IMR-90 (cell line): ENCODE measurements at regions of chr5 and their contacts with region 1.

Region 1: DNA sequence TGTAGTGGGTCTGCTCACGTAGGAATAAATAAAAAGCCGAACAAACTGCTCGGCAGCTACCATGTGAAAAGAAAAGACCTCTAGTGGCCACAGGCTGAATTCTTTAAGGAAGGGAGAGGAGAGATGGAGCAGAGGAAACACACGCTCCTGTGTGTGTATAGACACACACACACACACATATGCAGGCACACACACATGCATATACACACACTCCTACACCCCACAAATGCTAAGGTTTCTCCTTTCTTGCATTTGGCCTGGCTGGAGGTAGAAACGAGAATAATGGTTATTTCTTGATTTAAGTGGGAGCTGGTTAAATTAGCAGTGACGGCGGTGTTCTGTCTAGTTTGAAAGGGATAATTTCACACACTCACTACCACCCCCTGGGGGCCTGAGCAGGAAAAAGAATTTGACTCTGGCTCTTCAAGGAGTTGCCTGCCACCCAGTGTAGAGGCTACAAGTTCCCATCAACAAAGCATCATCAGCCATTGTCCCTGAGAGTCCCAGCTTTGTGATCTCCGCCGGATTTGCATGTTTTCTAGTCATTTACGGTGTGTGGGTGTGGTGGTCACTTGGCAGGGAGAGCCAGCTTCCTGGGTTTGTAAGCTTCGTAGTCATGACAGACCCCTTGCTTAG is at the start of gene INSYN2B:
- DNase-seq: peak; percentile 87
- ATAC-seq: peak; percentile 79
- H3K4me3 ChIP-seq: peak within 1 kb of the TSS; percentile 66
- H3K27ac ChIP-seq: peak within 1 kb of the TSS; percentile 85
- H3K4me1 ChIP-seq: peaks cover 21% of the 10 kb centered on the region
- H3K27me3 ChIP-seq: no peaks in the 10 kb centered on the region
- CTCF ChIP-seq: peak; percentile 89
- POLR2A ChIP-seq: peak; percentile 55
- RAD21 ChIP-seq: peak; percentile 78
- total RNA-seq, gene INSYN2B: 33.5 and 43.6 TPM in 2 replicates

Region 2: DNA sequence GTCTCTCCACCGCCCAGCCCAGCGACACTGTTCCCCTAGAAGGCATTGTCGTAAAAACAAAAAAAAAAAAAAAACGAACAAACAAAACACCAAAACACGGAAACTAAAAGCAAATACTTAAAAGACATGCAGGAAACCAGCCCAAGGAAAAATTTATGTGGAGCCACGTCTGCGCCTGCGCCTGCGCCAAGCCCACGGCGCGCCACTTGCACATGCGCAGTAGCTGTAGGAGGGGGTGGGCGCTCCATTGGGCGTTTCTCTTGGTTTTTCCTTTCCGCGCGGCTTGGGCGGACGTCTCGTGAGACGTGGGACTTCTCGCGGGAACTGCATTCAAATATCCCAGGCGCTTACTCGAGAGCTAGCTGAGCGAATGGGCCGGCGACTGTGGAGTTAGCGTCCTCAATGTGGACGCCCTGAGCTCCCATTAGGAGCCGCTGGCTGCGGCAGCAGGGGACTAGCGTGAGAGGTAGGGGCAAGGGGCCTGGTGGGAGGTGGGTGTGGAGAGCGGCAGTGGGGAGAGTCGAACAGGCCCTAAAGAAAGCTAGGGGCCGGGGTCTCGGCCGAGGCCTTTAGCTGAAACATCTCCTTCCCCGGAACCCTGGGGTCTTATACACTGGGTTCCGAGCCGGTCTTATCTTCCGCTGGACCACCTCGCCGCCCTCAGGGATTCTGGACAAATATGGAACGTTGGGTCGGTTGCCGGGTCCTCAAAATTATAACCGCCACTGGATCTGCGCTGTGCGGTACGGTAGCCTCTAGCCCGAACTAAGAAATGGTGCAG is 396.9 kb before region 1 on chr5 and contains the start of gene SPDL1:
- CTCF ChIA-PET with region 1: interaction called, 4 read pairs
- POLR2A ChIA-PET with region 1: no interaction called
- dilution Hi-C with region 1: no loop called
- in situ Hi-C with region 1: no loop called
- intact Hi-C with region 1: loop called (anchors 2 kb)
- DNase-seq: peak; percentile 95
- ATAC-seq: peak; percentile 95
- H3K4me3 ChIP-seq: peak within 1 kb of the TSS; percentile 66
- H3K27ac ChIP-seq: peak within 1 kb of the TSS; percentile 72
- H3K4me1 ChIP-seq: peaks cover 2% of the 10 kb centered on the region; the same call in 1 of the 2 replicates
- H3K27me3 ChIP-seq: no peaks in the 10 kb centered on the region
- CTCF ChIP-seq: no peak
- POLR2A ChIP-seq: peak; percentile 87
- RAD21 ChIP-seq: no peak
- total RNA-seq, gene SPDL1: 18.8 and 48.6 TPM in 2 replicates

Region 3: GRCh38 chr5:169706758-169707691 is 273.5 kb before region 1 on chr5:
- CTCF ChIA-PET with region 1: interaction called, 117 read pairs
- POLR2A ChIA-PET with region 1: interaction called, 3 read pairs
- dilution Hi-C with region 1: no loop called
- in situ Hi-C with region 1: loop called (anchors 5 kb)
- intact Hi-C with region 1: loop called (anchors 1 kb)
- DNase-seq: peak; percentile 86
- ATAC-seq: peak; percentile 70
- H3K4me3 ChIP-seq: no peak overlapping the region
- H3K27ac ChIP-seq: peak overlapping the region; percentile 19; the same call in 1 of the 2 replicates
- H3K4me1 ChIP-seq: peaks cover 26% of the 10 kb centered on the region
- H3K27me3 ChIP-seq: no peaks in the 10 kb centered on the region
- CTCF ChIP-seq: no peak
- POLR2A ChIP-seq: no peak
- RAD21 ChIP-seq: no peak

Region 4: GRCh38 chr5:169805527-169805934 is 175.0 kb before region 1 on chr5:
- CTCF ChIA-PET with region 1: interaction called, 23 read pairs
- POLR2A ChIA-PET with region 1: no interaction called
- dilution Hi-C with region 1: no loop called
- in situ Hi-C with region 1: no loop called
- intact Hi-C with region 1: loop called (anchors 1 kb)
- DNase-seq: peak; percentile 61
- ATAC-seq: no peak
- H3K4me3 ChIP-seq: no peak overlapping the region
- H3K27ac ChIP-seq: peak overlapping the region; percentile 80
- H3K4me1 ChIP-seq: peaks cover 16% of the 10 kb centered on the region
- H3K27me3 ChIP-seq: no peaks in the 10 kb centered on the region
- CTCF ChIP-seq: no peak
- POLR2A ChIP-seq: no peak
- RAD21 ChIP-seq: no peak

Region 5: DNA sequence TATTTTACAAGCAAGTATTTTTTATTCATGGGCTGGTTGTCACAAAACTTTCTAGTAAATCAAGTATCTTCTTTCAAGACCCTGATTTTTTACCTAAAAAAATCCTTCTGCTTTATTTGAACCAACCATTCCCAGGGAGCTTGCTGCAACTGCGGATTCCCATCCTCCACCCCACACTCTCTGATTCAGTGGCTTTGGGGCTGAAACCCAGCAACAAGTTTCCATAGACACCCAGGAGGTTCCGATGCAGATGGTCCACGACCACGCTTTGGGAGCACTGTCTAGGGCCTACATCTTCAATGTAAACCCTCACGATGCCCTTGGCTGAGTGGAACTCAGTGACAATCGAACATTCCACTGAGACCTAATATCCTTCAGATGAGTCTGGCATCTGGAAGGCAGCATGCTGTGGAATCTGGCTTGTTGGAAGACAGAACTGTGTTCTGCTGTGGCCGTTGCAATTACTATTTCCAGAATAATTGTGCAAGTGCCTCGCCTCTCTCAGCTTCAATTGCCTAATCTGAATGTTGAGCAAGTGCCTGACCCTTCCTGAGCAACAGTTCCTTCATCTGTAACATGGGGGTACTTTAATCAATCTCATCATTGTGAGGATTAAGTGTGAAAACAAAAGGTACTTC is 105.3 kb before region 1 on chr5:
- CTCF ChIA-PET with region 1: interaction called, 16 read pairs
- POLR2A ChIA-PET with region 1: no interaction called
- dilution Hi-C with region 1: no loop called
- in situ Hi-C with region 1: no loop called
- intact Hi-C with region 1: no loop called
- DNase-seq: peak; percentile 23
- ATAC-seq: peak; percentile 55
- H3K4me3 ChIP-seq: no peak overlapping the region
- H3K27ac ChIP-seq: no peak overlapping the region
- H3K4me1 ChIP-seq: peaks cover 9% of the 10 kb centered on the region
- H3K27me3 ChIP-seq: no peaks in the 10 kb centered on the region
- CTCF ChIP-seq: no peak
- POLR2A ChIP-seq: no peak
- RAD21 ChIP-seq: no peak

Region 6: GRCh38 chr5:169945831-169946261 is 34.7 kb before region 1 on chr5:
- CTCF ChIA-PET with region 1: interaction called, 11 read pairs
- POLR2A ChIA-PET with region 1: no interaction called
- dilution Hi-C with region 1: no loop called
- in situ Hi-C with region 1: no loop called
- intact Hi-C with region 1: no loop called
- DNase-seq: peak; percentile 95
- ATAC-seq: peak; percentile 95
- H3K4me3 ChIP-seq: peak overlapping the region; percentile 2; the same call in 1 of the 2 replicates
- H3K27ac ChIP-seq: peak overlapping the region; percentile 91
- H3K4me1 ChIP-seq: peaks cover 14% of the 10 kb centered on the region
- H3K27me3 ChIP-seq: no peaks in the 10 kb centered on the region
- CTCF ChIP-seq: no peak
- POLR2A ChIP-seq: no peak
- RAD21 ChIP-seq: peak; percentile 23; the same call in 1 of the 2 replicates